HEK293 (cell line): ENCODE measurements at regions of chr14 and their contacts with region 1.

Region 1: GRCh38 chr14:22822571-22823098 is 7.1 kb upstream of the MRPL52 start:
- H3K4me3 ChIP-seq: peak overlapping the region; percentile 15
- H3K27ac ChIP-seq: no peak overlapping the region
- H3K4me1 ChIP-seq: peaks cover 2% of the 10 kb centered on the region; the same call in 1 of the 2 replicates
- CTCF ChIP-seq: peak; percentile 68

Region 2: DNA sequence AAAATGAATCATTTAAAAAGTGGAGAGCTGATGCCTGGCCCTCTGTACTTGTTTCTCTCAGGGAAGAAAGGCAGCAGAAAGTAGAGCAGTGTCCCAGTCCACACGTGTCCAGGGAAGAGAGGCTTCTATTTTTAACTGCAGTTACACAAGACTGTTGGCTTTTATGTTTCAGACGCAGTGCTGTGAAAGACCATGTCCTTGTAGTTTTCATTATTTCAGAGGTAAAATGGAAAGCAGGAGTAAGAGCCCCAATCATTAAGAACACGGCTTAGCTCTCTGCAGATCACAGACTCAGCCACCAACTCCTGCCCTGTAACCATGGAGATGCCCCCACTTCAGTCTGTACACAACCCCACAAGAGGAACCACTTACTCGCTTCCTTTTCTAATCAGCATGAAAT is 569.9 kb before region 1 on chr14:
- CTCF ChIA-PET with region 1: no interaction called
- POLR2A ChIA-PET with region 1: no interaction called
- H3K4me3 ChIP-seq: no peak overlapping the region
- H3K27ac ChIP-seq: no peak overlapping the region
- H3K4me1 ChIP-seq: no peaks in the 10 kb centered on the region
- CTCF ChIP-seq: no peak

Region 3: GRCh38 chr14:22536853-22537338 is 285.7 kb before region 1 on chr14:
- CTCF ChIA-PET with region 1: no interaction called
- POLR2A ChIA-PET with region 1: no interaction called
- H3K4me3 ChIP-seq: no peak overlapping the region
- H3K27ac ChIP-seq: peak overlapping the region; percentile 33; the same call in 1 of the 2 replicates
- H3K4me1 ChIP-seq: 0 out of 2 replicates have a peak, but pooled peaks cover 2% of the 10 kb centered on the region
- CTCF ChIP-seq: no peak

Region 4: DNA sequence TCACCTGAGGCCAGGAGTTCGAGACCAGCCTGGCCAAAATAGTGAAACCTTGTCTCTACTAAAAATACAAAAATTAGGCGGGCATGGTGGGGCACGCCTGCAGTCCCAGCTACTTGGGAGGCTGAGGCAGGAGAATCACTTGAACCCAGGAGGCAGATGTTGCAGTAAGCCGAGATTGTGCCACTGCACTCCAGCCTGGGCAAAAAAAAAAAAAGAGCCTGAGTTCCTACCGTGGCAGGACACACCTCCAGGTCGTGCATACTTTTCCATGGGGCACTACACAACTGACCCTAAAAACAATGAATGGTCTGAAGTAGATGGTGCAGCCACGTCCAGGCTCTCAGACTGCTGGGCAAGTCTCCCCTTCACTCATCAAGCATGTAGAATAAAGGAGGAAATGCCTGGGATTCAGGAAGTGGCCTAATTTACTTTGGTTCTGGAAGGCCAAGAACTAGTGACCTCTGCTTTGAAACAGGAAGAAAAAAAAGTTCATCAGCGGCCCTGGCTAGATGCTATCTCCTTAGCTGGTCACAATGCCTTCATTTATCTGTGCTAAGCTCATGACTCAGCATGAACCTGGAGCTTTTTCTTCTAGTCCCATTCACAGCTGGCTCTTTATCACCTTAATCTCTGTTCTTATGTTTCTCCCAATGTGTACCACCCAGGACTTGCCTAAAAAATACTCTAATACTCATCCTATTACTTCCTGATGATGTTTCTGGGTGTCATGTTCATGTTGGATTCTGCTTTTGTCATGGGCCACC is 122.7 kb before region 1 on chr14:
- CTCF ChIA-PET with region 1: no interaction called
- POLR2A ChIA-PET with region 1: no interaction called
- H3K4me3 ChIP-seq: no peak overlapping the region
- H3K27ac ChIP-seq: no peak overlapping the region
- H3K4me1 ChIP-seq: no peaks in the 10 kb centered on the region
- CTCF ChIP-seq: no peak

Region 5: DNA sequence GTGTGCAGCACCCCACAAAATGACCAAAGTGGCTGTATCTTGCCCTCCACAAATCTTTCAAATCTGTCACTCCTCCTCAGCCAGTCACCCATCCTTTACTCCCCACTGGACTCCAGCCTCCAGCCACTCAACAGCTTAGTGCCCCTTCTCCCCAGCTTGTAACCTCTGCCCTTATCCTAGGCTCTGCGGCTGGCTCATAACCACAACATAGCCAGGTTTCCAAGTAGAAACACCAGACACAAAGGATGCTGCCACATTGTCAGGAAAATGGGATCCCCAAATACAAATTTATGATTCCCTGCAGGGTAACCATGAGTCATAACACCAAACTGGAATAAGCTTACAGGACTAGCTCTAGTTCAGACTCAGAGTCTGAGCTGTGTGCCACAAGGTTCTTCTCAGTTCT is 41.0 kb before region 1 on chr14:
- CTCF ChIA-PET with region 1: interaction called, 11 read pairs
- POLR2A ChIA-PET with region 1: no interaction called
- H3K4me3 ChIP-seq: no peak overlapping the region
- H3K27ac ChIP-seq: no peak overlapping the region
- H3K4me1 ChIP-seq: no peaks in the 10 kb centered on the region
- CTCF ChIP-seq: no peak

Region 6: DNA sequence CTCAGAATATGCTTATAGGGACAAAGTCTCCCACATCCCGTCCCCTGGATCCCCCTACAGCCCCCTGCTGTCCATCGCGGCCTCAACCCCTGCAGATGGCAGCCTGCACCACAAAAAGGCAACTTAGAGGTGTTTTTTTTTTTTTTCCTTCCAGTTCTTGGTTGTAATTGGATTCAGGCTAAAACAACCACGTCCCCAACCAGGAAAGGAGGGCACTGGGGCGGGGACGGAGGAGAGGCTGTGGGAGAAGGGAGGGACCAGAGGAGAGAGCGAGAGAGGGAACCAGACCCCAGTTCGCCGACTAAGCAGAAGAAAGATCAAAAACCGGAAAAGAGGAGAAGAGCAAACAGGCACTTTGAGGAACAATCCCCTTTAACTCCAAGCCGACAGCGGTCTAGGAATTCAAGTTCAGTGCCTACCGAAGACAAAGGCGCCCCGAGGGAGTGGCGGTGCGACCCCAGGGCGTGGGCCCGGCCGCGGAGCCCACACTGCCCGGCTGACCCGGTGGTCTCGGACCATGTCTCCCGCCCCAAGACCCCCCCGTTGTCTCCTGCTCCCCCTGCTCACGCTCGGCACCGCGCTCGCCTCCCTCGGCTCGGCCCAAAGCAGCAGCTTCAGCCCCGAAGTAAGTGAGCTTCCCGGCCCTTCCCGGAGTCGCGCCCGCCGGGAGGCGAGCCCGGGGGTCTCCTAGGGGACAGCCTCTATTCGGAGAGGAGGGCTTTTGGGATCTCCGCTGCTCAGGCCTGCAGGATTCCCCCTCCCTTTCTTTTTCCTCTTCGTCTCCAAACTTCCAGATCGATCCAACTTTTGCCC is 13.9 kb after region 1 on chr14 and contains the start of gene MMP14:
- CTCF ChIA-PET with region 1: interaction called, 10 read pairs
- POLR2A ChIA-PET with region 1: interaction called, 3 read pairs
- H3K4me3 ChIP-seq: peak within 1 kb of the TSS; percentile 24
- H3K27ac ChIP-seq: peak within 1 kb of the TSS; percentile 24
- H3K4me1 ChIP-seq: no peaks in the 10 kb centered on the region
- CTCF ChIP-seq: no peak